Dendritic cell treated with granulocyte-macrophage colony-stimulating factor and Interleukin-4, amounts not matched to agents 40 ng/mL and 50 ng/mL, for 4 days (primary cell): ENCODE measurements at regions of chr1 and their contacts with region 1.

Region 1: DNA sequence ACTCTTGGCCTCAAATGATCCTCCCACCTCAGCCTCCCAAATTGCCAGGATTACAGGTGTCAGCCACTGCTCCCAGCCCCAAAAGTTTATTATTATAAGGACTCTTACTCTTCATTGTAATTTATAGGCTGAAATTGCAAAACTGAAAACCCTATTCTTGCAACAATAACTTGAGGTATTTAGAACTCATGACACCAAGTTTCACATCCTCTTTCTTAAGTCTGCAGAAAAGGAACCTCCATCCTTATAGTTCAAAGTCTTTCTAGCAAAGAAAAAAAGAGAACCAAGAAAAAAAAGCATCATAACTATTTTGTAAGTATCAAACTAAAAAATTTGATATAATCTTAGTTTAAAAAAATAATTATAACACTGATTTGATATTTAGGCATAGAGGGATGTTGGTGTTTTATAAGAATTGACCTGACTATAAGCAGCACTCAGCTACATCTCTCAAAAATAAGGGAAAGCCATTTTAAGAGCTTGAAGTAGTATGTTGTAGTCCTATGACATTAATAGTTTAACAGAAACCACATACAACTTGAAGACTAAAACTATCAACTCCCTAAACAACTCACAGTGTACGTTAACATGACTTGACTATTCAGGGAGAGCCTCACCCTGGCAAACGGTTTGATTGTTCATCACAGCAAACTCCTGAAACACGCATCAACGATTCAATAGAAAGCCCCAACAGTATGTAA is 122.4 kb downstream of the AKT3 start:
- H3K4me3 Mint-ChIP-seq: peak overlapping the region; percentile 35
- H3K27ac Mint-ChIP-seq: peak overlapping the region; percentile 88
- H3K4me1 Mint-ChIP-seq: peaks cover 80% of the 10 kb centered on the region
- H3K27me3 Mint-ChIP-seq: no peaks in the 10 kb centered on the region

Region 2: DNA sequence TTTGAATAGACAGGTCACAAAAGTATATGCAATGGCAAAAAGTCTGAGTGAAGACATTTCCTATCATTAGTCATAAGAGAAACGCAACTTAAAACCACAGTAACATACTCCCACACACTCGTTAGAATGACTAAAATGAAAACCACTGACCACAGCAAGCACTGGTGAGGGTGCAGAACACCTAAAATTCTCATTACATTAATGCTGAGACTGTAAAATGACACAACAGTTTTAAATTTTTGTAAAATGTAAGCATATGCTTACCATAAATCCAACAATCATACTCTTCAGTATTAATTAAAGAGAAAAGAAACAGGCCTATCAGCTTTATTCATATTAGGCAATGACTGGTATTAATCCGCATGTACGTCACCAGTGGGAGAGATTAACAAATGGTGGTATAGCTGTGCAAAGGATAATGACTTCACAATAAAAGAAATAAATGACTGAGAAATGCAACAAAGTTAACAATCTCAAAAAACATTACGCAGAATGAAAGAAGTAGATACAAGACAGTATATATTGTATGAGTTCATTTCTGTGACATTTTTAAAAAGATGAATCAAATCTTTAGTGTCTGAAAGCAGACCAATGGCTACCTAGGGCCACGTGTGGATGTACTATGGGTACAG is 131.1 kb before region 1 on chr1:
- intact Hi-C with region 1: loop called (anchors 5 kb)
- H3K4me3 Mint-ChIP-seq: no peak overlapping the region
- H3K27ac Mint-ChIP-seq: peak overlapping the region; percentile 62
- H3K4me1 Mint-ChIP-seq: peaks cover 18% of the 10 kb centered on the region
- H3K27me3 Mint-ChIP-seq: no peaks in the 10 kb centered on the region

Region 3: GRCh38 chr1:243708210-243708609 is 19.4 kb before region 1 on chr1:
- intact Hi-C with region 1: loop called (anchors 2 kb)
- H3K4me3 Mint-ChIP-seq: no peak overlapping the region
- H3K27ac Mint-ChIP-seq: no peak overlapping the region
- H3K4me1 Mint-ChIP-seq: peaks cover 12% of the 10 kb centered on the region
- H3K27me3 Mint-ChIP-seq: no peaks in the 10 kb centered on the region

Region 4: GRCh38 chr1:243850452-243851256 is 123.0 kb after region 1 on chr1:
- intact Hi-C with region 1: loop called (anchors 5 kb)
- H3K4me3 Mint-ChIP-seq: peak overlapping the region; percentile 77
- H3K27ac Mint-ChIP-seq: peak overlapping the region; percentile 76
- H3K4me1 Mint-ChIP-seq: peaks cover 15% of the 10 kb centered on the region
- H3K27me3 Mint-ChIP-seq: peaks cover 27% of the 10 kb centered on the region